SK-MEL-5 (cell line): ENCODE measurements at regions of chr11 and their contacts with region 1.

Region 1: GRCh38 chr11:128643661-128644317 is 50.1 kb upstream of the FLI1 start:
- DNase-seq: peak; percentile 18

Region 2: DNA sequence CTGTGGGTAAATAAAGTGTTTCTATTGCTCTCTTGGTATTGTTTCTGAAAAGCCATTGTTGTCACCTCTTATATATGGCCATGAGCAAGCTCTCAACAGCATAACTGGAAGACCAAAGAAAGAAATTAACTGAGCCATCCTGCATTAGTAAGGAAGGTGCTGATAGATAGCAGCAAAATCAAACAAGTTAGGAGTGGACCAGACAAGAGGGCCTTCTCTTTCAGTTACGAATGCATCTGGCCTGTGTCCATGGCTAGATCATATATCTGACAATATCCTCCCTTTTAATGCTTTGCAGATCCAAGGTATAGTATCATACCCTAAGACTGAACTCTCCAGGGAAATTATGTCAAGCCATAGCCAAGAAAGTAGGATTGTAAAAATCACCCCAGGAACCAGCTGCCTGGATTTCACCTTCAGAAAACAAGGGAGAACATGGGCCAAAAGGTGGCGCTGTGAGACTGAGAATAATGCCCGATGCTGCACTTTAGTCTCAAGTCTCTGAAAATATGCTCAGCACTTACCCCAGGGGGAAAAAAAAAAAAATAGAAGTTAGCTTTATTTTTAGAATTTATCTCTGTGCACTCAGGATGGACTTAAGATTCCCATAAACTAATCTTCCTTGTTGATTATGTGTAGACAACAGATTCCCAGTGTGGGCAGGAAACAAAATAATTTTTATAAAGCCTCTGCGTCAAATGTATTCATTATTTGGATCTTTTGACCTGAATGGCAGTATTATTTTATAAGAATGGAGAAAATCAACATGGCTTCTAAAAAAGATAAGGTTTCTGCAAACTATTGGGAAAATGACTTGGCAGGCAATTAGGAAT is 471.5 kb before region 1 on chr11:
- in situ Hi-C with region 1: loop called (anchors 10 kb)
- DNase-seq: peak; percentile 81